ENCODE measurements at regions of chr22 and their contacts with region 1.

Region 1: DNA sequence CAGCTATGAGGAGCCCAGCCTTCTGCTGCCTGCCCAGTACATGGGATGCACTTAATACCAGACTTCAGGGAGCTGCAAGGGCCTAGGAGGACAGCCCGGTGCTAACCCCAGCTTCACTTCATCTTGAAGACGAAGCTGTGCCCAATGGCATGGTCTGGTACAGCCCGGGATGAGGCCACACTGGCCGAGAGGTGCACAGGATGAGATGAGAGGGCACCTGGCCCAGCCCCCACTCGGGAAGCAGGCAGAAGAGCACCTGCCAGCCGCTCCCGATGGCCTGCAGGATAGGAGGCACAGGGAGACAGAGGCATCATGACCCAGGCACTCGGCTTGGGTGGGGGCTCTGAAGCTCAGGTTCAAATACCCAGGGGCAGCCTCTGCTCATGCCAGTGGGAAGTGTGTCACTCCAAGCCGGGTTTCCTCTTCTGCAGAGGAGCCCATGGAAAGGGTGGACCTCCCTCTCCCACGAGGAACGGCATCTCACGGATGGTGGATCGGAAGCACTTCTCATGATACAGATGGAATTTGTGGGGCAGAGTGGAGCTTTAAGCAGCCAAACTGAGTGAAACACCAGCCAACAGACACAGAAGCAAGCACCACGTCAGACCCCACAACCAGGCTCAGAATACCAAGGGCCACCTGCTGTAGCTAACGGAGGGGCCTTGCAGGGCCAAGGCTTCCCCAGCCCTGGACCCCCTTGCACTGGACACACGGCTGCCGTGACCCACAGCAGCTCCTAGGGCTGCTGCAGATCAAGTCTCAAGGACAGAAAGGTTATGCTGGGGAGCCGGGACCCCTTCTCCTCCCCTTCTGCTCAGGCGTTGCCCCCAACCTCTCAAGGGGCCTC is 875.2 kb downstream of the BRD1 start:
- DNase-seq: no peak
- H3K4me3 ChIP-seq: no peak overlapping the region
- H3K27ac ChIP-seq: no peak overlapping the region
- H3K4me1 ChIP-seq: no peaks in the 10 kb centered on the region
- H3K27me3 ChIP-seq: peaks cover 71% of the 10 kb centered on the region
- CTCF ChIP-seq: no peak

Region 2: DNA sequence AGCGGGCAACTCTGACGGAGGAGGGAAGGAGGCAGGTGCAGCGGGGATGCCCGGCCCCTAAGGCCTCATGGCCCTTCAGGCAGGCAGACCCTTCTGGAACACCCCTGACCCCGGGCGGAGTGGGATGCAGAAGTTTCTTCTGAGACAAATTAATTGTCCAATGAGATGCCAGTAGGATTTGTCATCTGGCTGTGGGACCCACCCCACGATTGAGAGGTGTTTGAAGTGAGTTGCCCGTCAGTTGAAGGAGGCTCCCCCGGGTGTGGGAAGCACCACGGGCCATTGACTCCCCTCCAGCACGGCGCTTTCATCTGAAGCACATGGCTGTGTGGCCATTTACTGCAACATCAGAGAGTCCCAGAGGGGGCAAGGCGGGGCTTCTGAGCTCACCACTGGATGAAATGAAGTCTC is 347.3 kb after region 1 on chr22:
- CTCF ChIA-PET with region 1: interaction called, 12 read pairs
- POLR2A ChIA-PET with region 1: no interaction called
- intact Hi-C with region 1: no loop called
- DNase-seq: no peak
- H3K4me3 ChIP-seq: no peak overlapping the region
- H3K27ac ChIP-seq: no peak overlapping the region
- H3K4me1 ChIP-seq: no peaks in the 10 kb centered on the region
- H3K27me3 ChIP-seq: peaks cover 100% of the 10 kb centered on the region
- CTCF ChIP-seq: no peak

Measured in PC-9 (cell line).